Activated CD8-positive, alpha-beta T cell treated with anti-CD3 and anti-CD28 coated beads, Interleukin-2, amount 10 ng/mL, durations not matched to agents 7 days and 5 days (primary cell): ENCODE measurements at regions of chr6 and their contacts with region 1.

Region 1: DNA sequence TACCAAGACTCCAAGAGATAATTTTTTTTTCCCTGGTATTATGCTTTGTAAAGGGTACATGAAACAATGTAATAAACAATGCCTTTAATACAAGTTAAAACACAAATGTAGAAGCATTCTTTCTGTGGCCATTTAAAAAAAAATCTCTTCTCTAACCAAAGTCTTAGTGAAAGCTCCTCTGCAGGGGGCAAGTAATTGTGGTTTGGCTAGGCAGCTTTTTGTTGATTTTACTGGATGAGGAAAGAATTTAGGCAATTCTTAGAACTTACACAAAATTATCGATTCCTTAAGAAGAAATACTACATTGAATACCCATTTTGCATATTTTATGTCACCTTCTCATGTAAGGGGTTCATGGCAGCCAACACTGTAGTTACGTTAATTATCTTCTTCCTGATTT is 12.4 kb downstream of the TFB1M start:
- DNase-seq: no peak
- ATAC-seq: no peak
- H3K4me3 Mint-ChIP-seq: no peak overlapping the region
- H3K27ac Mint-ChIP-seq: no peak overlapping the region
- H3K4me1 Mint-ChIP-seq: peaks cover 4% of the 10 kb centered on the region
- H3K27me3 Mint-ChIP-seq: no peaks in the 10 kb centered on the region

Region 2: GRCh38 chr6:155287762-155288161 is 14.1 kb before region 1 on chr6:
- CTCF ChIA-PET with region 1: interaction called, 10 read pairs
- POLR2A ChIA-PET with region 1: no interaction called
- DNase-seq: no peak
- ATAC-seq: no peak
- H3K4me3 Mint-ChIP-seq: no peak overlapping the region
- H3K27ac Mint-ChIP-seq: no peak overlapping the region
- H3K4me1 Mint-ChIP-seq: peaks cover 2% of the 10 kb centered on the region
- H3K27me3 Mint-ChIP-seq: no peaks in the 10 kb centered on the region